Left lung (tissue), 14 donors: ENCODE measurements at regions of chr10 and their contacts with region 1.

Region 1: GRCh38 chr10:110864662-110865140 is 7.0 kb upstream of the PDCD4 start:
- DNase-seq: peak in 1 of 4 donors; percentile 37
- ATAC-seq: peak; percentile 65
- H3K4me3 ChIP-seq: no peak overlapping the region
- H3K27ac ChIP-seq: peak overlapping the region; percentile 84 to 96
- H3K4me1 ChIP-seq: peaks cover 25 to 93% of the 10 kb centered on the region in 2 donors
- H3K27me3 ChIP-seq: no peaks in the 10 kb centered on the region
- CTCF ChIP-seq: no peak

Region 2: GRCh38 chr10:110567201-110568054 is 297.3 kb before region 1 on chr10 and contains the start of gene SMC3:
- intact Hi-C with region 1: no loop called
- DNase-seq: peak; percentile 92 to 97 (median 96)
- ATAC-seq: peak; percentile 97
- H3K4me3 ChIP-seq: peak within 1 kb of the TSS; percentile 92 to 100
- H3K27ac ChIP-seq: peak within 1 kb of the TSS; percentile 84 to 90
- H3K4me1 ChIP-seq: peaks cover 4 to 47% of the 10 kb centered on the region in 2 donors
- H3K27me3 ChIP-seq: no peaks in the 10 kb centered on the region
- CTCF ChIP-seq: no peak
- polyA plus RNA-seq, gene SMC3: 69.4 to 94.4 (median 85.0) TPM

Region 3: GRCh38 chr10:110803830-110804338 is 60.8 kb before region 1 on chr10:
- intact Hi-C with region 1: loop called in 1 of 2 experiments (anchors 10 kb)
- DNase-seq: peak in 2 of 4 donors; percentile 56 to 63
- ATAC-seq: peak; percentile 91
- H3K4me3 ChIP-seq: no peak overlapping the region
- H3K27ac ChIP-seq: no peak overlapping the region
- H3K4me1 ChIP-seq: peaks cover 10 to 20% of the 10 kb centered on the region in 2 donors
- H3K27me3 ChIP-seq: peaks cover 0 to 14% of the 10 kb centered on the region in 2 donors
- CTCF ChIP-seq: peak; percentile 51 to 61